Heart left ventricle (tissue), 16 donors: ENCODE measurements at regions of chr12 and their contacts with region 1.

Region 1: DNA sequence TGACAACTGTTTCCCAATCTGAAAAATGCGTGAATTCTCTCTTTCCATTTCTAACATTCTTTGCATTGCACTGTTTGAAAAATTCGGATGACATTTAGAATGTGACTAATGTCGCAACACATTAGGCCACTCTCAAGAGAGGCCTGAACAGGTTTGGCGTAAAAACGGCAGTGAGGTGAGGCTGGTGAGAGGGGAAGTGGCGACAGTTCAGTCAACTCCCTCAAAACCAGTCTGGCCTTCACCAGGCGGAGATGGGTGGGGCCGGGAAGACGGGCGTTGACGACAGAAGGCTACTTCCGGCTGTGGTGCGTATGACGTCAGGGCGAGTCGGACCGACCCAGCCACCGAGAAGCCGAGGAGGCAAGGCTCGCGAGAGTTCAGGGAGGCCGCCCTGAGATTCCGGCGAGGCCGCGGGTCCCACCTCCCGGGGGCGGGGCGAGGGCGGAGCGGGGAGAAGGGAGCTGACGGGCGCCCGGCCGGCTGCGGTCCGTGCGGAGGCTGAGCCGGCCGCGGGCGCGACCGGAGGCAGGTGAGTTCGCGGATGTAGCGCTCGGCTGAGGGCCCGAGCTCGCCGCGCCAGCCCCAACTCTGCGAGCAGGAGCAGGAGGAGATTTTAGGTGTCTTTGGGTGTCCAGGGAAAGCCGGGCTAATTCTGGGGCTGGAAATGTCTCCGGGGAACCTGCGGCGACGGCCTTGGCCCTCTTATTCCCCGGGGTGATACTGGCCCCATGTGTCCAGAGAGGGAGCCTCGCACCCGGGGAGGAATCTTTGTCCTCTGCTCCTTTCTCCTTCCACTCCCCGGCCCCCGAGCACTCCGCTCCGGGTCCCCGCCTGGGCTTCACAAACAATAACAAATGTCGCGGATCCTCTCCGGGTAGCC is at the start of gene STK38L:
- DNase-seq: peak; percentile 98 to 99 (median 99)
- ATAC-seq: peak; percentile 94 to 99 (median 98)
- H3K4me3 ChIP-seq: peak within 1 kb of the TSS; percentile 59 to 96 (median 76)
- H3K27ac ChIP-seq: peak within 1 kb of the TSS; percentile 73 to 97 (median 90)
- H3K4me1 ChIP-seq: peaks cover 0 to 38% (median 25%) of the 10 kb centered on the region in 12 donors
- H3K27me3 ChIP-seq: no peaks in the 10 kb centered on the region
- CTCF ChIP-seq: peak in 9 of 12 donors; percentile 6 to 44 (median 29)
- POLR2A ChIP-seq: peak; percentile 73 to 98
- total RNA-seq, gene STK38L: 26.3 to 142 (median 83.7) TPM

Region 2: DNA sequence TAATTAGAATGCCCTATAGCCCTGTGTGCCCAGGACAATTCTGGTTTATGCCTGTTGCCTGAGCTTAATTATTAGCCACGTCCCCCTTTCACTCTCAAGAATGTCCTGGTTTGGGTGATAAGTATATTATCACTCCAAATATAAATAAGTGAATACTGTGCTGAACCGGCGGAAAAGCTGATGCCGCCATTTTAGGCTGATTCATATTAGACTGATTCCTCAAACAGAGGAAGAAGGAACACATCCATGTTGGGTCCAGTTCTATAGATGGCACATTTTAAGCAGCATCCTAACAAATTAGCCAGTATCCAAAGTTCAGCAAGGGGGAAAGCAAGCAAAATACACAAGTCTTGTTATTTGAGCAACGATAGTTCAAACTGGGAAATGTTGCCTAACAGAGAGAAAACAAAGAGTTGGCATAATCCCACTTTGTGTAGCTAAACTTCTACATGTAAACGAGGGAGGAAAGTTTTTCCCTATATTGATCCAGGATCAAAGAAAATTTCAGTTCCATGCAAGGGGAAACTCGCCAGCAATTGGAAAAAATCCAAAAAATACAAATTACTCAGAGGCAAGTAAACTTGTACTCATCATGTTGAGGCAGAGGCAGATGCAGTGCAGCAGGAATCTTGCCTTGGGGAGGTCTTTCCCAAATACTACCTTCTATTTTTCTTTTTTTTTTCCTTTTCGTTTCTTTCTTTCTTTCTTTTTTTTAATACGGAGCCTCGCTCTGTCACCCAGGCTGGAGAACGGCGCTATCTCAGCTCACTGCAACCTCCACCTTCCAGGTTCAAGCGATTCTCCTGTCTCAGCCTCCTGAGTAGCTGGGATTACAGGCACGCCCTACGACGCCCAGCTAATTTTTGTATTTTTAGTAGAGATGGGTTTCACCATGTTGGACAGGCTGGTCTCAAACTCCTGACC is 507.2 kb before region 1 on chr12:
- intact Hi-C with region 1: no loop called
- DNase-seq: no peak
- ATAC-seq: no peak
- H3K4me3 ChIP-seq: no peak overlapping the region
- H3K27ac ChIP-seq: no peak overlapping the region
- H3K4me1 ChIP-seq: peaks cover 0 to 52% (median 12%) of the 10 kb centered on the region in 12 donors
- H3K27me3 ChIP-seq: no peaks in the 10 kb centered on the region
- CTCF ChIP-seq: no peak
- POLR2A ChIP-seq: no peak

Region 3: DNA sequence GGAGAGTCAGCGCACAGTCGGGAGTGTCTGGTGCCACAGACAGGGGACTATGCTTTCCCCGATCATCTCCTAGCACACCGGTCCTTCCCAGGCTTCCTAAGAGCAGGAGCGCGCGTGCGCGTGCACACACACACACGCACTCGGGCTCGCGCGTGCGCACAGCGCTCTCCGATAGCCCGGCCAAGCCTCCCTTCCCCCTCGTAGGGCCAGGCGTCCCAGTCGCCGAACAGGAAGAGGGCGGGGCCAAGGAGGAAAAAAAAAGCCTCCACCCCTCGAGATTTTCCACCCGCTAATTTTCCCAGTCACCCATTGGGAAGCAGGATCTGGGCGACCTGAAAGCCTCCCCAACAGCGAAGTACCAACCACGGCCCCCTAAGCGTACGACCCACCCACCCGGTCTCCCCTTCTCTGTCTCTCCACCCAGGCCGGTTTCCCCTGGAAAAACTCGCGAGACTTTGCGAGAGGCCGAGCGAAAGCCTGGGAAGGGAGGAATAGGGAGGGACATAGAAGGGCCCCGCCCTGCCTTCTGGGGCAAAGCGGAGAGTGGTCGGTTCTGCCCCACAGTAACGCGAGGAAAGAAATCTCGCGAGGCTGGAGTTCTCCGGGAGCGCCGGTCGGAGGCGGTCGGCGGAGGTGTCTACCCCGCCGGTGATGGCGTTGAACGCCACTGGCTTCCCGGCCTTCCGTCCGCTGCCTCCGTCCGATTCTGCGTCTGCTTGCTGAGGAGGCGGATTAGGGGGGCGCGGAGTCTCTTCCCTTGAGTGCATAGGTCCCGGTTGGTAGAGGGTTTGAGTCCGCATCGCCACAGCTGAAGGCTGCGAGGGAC is 306.0 kb before region 1 on chr12 and contains the starts of genes FGFR1OP2 and INTS13:
- intact Hi-C with region 1: loop called in 1 of 10 experiments (anchors 10 kb)
- DNase-seq: peak; percentile 99 to 100 (median 99)
- ATAC-seq: peak; percentile 97 to 99 (median 98)
- H3K4me3 ChIP-seq: peak within 1 kb of the TSS; percentile 70 to 97 (median 88)
- H3K27ac ChIP-seq: peak within 1 kb of the TSS; percentile 94 to 98 (median 97)
- H3K4me1 ChIP-seq: peaks cover 3 to 69% (median 39%) of the 10 kb centered on the region in 12 donors
- H3K27me3 ChIP-seq: no peaks in the 10 kb centered on the region
- CTCF ChIP-seq: no peak
- POLR2A ChIP-seq: peak; percentile 77 to 98
- total RNA-seq, gene FGFR1OP2: 26.3 to 54.9 (median 30.8) TPM
- total RNA-seq, gene INTS13: 14.1 to 24.1 (median 18.5) TPM

Region 4: DNA sequence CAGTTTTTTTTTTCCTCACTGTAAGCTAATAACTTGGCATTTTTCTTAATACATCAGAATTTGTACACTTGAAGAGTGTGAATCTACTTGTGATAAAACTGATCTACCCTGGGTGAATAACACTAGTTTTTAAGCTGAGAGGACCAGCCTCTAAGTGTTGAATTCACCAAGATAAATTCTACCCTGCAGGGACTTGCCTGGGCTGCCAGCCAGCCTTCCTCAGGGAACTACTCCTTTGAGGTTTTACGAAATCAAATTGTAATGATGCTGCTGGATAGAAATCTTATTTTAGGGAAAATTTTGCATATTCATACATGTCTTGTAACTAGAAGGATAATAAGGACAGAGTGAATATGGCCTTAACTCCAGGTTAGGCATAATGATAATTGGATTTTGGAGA is 219.8 kb before region 1 on chr12:
- intact Hi-C with region 1: loop called in 7 of 10 experiments (anchors 5 to 10 kb)
- DNase-seq: no peak
- ATAC-seq: no peak
- H3K4me3 ChIP-seq: peak overlapping the region in 2 of 12 donors; percentile 80 to 90
- H3K27ac ChIP-seq: no peak overlapping the region
- H3K4me1 ChIP-seq: peaks cover 0 to 32% (median 20%) of the 10 kb centered on the region in 12 donors
- H3K27me3 ChIP-seq: no peaks in the 10 kb centered on the region
- CTCF ChIP-seq: no peak
- POLR2A ChIP-seq: no peak

Region 5: DNA sequence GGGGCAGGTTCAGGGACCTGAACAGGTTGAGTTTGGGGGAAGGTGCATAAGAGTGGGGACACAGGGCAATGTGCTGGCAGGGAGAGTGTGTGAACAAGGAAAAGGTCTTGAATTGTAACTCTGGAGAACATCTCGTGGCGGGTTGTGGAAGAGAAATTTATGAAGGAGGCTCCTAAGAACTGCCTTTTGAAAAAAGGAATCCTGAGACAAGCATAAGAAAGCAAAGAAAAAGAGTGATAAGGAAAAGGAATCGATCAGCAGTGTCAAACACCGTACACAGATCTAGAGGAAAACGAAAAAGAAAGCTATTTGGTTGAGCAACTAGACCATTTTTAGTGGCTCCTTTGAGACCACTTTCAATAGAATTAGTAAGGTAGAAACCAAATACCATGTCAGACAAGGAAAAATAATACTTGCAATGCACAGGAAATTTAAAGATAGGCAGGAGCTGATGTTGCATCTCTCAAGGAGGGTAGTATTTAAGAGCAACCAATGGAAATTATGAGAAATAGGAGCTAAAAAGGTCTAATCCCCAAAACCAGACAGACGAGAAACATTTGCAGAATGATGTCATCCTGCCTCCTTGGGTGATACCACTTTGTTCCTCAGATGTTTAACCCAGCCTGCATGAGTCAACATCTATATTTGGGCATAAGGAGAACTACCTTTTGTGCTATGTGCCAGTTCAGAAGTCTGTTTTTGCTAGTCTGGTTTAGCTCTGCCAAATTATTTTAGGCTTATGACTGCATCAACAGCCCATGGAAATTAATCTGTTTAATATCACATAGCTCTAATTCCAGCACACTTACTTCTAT is 64.4 kb before region 1 on chr12:
- intact Hi-C with region 1: loop called in 1 of 10 experiments (anchors 10 kb)
- DNase-seq: peak in 1 of 5 donors; percentile 48
- ATAC-seq: peak; percentile 85 to 94 (median 93)
- H3K4me3 ChIP-seq: no peak overlapping the region
- H3K27ac ChIP-seq: peak overlapping the region; percentile 15 to 93 (median 78)
- H3K4me1 ChIP-seq: peaks cover 0 to 37% (median 13%) of the 10 kb centered on the region in 12 donors
- H3K27me3 ChIP-seq: no peaks in the 10 kb centered on the region
- CTCF ChIP-seq: no peak
- POLR2A ChIP-seq: no peak

Region 6: DNA sequence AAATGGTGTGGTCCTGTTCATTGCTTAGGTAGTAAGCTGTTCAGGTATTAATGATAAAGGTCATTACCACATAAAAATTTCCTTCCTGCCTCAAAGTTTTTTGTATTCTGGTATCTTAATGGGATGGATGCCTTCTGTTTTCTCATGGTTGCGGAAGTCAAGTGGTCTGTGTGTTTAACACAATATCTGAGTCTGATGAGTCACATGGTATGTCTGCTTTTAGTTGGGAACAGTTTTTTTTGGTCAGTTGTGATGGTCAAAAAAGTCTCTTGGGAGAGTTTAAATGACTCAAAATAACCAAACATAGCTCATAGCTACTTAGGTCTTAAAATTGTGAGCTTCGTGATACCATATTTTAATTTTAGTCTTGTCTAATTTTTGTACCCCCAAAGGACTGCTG is 40.7 kb after region 1 on chr12:
- intact Hi-C with region 1: loop called in 6 of 10 experiments (anchors 5 kb)
- DNase-seq: no peak
- ATAC-seq: peak; percentile 50 to 86 (median 72)
- H3K4me3 ChIP-seq: no peak overlapping the region
- H3K27ac ChIP-seq: peak overlapping the region; percentile 49 to 80 (median 67)
- H3K4me1 ChIP-seq: peaks cover 3 to 72% (median 51%) of the 10 kb centered on the region in 12 donors
- H3K27me3 ChIP-seq: no peaks in the 10 kb centered on the region
- CTCF ChIP-seq: no peak
- POLR2A ChIP-seq: no peak

Region 7: DNA sequence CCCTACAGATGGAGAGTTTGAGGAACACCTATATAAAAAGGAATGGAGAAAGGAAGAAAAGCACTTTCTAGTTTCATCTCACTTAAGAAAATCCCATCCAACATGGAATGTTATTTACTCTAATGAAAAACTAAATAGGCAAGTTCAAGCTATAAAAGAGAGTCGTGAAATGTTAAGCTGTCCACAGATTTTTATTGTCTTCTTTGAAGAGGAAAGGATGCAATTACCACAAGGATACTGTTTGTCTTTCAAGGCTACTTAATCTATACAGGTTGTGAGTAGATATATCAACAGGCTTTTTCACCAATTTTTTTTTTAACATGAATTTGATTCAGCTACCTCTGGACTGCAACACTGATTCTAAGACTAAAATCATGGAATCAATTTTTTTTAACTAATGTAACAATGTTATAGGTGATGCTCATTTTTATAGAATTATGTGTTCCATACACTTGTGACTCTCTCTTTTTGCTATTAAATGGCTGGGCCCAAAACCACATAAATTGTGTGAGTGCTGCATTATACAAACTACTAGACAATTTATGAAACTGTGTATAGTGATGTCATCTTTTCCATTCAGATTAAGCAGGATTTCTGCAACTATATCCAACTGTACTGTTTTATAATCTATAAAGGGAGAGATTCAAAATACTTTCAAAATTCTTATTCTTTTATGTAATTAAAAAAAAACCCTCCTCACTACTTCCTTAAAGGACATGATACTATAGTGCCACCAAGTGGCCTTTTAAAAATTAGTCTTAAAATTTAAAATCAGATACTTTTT is 61.8 kb after region 1 on chr12:
- intact Hi-C with region 1: loop called in 4 of 10 experiments (anchors 5 kb)
- DNase-seq: no peak
- ATAC-seq: peak in 2 of 4 donors; percentile 29 to 43
- H3K4me3 ChIP-seq: no peak overlapping the region
- H3K27ac ChIP-seq: peak overlapping the region in 6 of 12 donors; percentile 5 to 60 (median 42)
- H3K4me1 ChIP-seq: peaks cover 0 to 24% (median 5%) of the 10 kb centered on the region in 12 donors
- H3K27me3 ChIP-seq: no peaks in the 10 kb centered on the region
- CTCF ChIP-seq: peak; percentile 50 to 80 (median 67)
- POLR2A ChIP-seq: no peak